Psoas muscle (tissue), 8 donors: ENCODE measurements at regions of chr4 and their contacts with region 1.

Region 1: GRCh38 chr4:138680989-138681604 is 334.5 kb upstream of the NOCT start:
- DNase-seq: peak; percentile 71 to 80
- ATAC-seq: peak; percentile 54 to 87 (median 70)
- H3K4me3 ChIP-seq: no peak overlapping the region
- H3K27ac ChIP-seq: no peak overlapping the region
- H3K4me1 ChIP-seq: no peaks in the 10 kb centered on the region
- H3K27me3 ChIP-seq: no peaks in the 10 kb centered on the region
- CTCF ChIP-seq: peak; percentile 97

Region 2: DNA sequence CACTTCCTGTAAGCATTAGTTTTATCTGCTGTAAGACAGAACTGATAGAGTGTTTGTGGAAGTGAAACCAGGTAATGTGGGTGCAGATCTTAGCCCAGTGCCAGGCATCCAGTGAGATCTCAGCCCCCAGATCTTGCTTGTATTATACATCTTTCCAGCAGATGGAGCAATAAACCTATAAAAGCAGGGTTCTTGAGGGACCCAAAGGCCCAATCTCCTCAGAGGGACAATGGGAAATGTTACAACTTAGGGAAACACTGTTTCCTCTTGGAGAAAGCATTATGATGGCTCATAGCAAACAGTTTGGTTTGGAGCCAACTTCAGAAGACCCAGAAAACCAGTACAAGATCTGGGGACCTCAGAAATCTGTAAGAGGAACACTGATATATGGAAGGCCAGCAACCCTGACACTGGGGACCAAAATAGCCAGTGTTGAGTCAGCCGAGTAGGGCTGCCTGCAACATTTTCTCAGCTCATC is 645.3 kb before region 1 on chr4:
- intact Hi-C with region 1: loop called (anchors 2 to 5 kb)
- DNase-seq: no peak
- ATAC-seq: peak; percentile 76 to 95 (median 90)
- H3K4me3 ChIP-seq: no peak overlapping the region
- H3K27ac ChIP-seq: no peak overlapping the region
- H3K4me1 ChIP-seq: no peaks in the 10 kb centered on the region
- H3K27me3 ChIP-seq: no peaks in the 10 kb centered on the region
- CTCF ChIP-seq: peak; percentile 55

Region 3: GRCh38 chr4:138090150-138090917 is 590.8 kb before region 1 on chr4:
- intact Hi-C with region 1: loop called in 1 of 2 experiments (anchors 5 kb)
- DNase-seq: peak in 1 of 2 donors; percentile 15
- ATAC-seq: peak; percentile 70 to 85 (median 76)
- H3K4me3 ChIP-seq: peak overlapping the region; percentile 50
- H3K27ac ChIP-seq: no peak overlapping the region
- H3K4me1 ChIP-seq: peaks cover 14% of the 10 kb centered on the region
- H3K27me3 ChIP-seq: no peaks in the 10 kb centered on the region
- CTCF ChIP-seq: peak; percentile 79

Region 4: GRCh38 chr4:138182838-138183426 is 498.2 kb before region 1 on chr4:
- intact Hi-C with region 1: loop called in 1 of 2 experiments (anchors 2 kb)
- DNase-seq: no peak
- ATAC-seq: peak; percentile 48 to 89 (median 74)
- H3K4me3 ChIP-seq: no peak overlapping the region
- H3K27ac ChIP-seq: no peak overlapping the region
- H3K4me1 ChIP-seq: peaks cover 19% of the 10 kb centered on the region
- H3K27me3 ChIP-seq: no peaks in the 10 kb centered on the region
- CTCF ChIP-seq: peak; percentile 76

Region 5: GRCh38 chr4:138870737-138871554 is 189.8 kb after region 1 on chr4:
- intact Hi-C with region 1: loop called in 1 of 2 experiments (anchors 5 kb)
- DNase-seq: peak in 1 of 2 donors; percentile 20
- ATAC-seq: peak; percentile 68 to 90 (median 76)
- H3K4me3 ChIP-seq: no peak overlapping the region
- H3K27ac ChIP-seq: no peak overlapping the region
- H3K4me1 ChIP-seq: no peaks in the 10 kb centered on the region
- H3K27me3 ChIP-seq: no peaks in the 10 kb centered on the region
- CTCF ChIP-seq: peak; percentile 87

Region 6: GRCh38 chr4:138919094-138919936 is 238.2 kb after region 1 on chr4:
- intact Hi-C with region 1: loop called (anchors 5 kb)
- DNase-seq: peak; percentile 77 to 80
- ATAC-seq: peak; percentile 92 to 98 (median 95)
- H3K4me3 ChIP-seq: peak overlapping the region; percentile 29
- H3K27ac ChIP-seq: no peak overlapping the region
- H3K4me1 ChIP-seq: peaks cover 4% of the 10 kb centered on the region
- H3K27me3 ChIP-seq: no peaks in the 10 kb centered on the region
- CTCF ChIP-seq: peak; percentile 78

Region 7: GRCh38 chr4:139015269-139015947 is 334.3 kb after region 1 on chr4 and contains the start of gene NOCT:
- intact Hi-C with region 1: no loop called
- DNase-seq: peak; percentile 91 to 95
- ATAC-seq: peak; percentile 94 to 96 (median 94)
- H3K4me3 ChIP-seq: peak within 1 kb of the TSS; percentile 77
- H3K27ac ChIP-seq: peak within 1 kb of the TSS; percentile 92
- H3K4me1 ChIP-seq: peaks cover 34% of the 10 kb centered on the region
- H3K27me3 ChIP-seq: peaks cover 0 to 1% (median 0%) of the 10 kb centered on the region in 3 donors
- CTCF ChIP-seq: peak; percentile 17
- total RNA-seq, gene NOCT: 11.4 to 21.8 (median 15.0) TPM